Activated T-helper 1 cell treated with anti-CD3 and anti-CD28 coated beads, Interleukin-12 subunit alpha, Interleukin-12 subunit beta, Interleukin-2, Interleukin-4 antibody, amounts not matched to agents 30 ng/mL and 10 ng/mL and 1 ng/mL, durations not matched to agents 14 hours and 24 hours and 36 hours (primary cell): ENCODE measurements at regions of chr18 and their contacts with region 1.

Region 1: GRCh38 chr18:3593904-3594661 is 144.1 kb downstream of the TGIF1 start:
- DNase-seq: peak; percentile 83
- H3K4me3 Mint-ChIP-seq: peak overlapping the region; percentile 89
- H3K27ac Mint-ChIP-seq: peak overlapping the region; percentile 98
- H3K4me1 Mint-ChIP-seq: peaks cover 63% of the 10 kb centered on the region
- H3K27me3 Mint-ChIP-seq: no peaks in the 10 kb centered on the region

Region 2: DNA sequence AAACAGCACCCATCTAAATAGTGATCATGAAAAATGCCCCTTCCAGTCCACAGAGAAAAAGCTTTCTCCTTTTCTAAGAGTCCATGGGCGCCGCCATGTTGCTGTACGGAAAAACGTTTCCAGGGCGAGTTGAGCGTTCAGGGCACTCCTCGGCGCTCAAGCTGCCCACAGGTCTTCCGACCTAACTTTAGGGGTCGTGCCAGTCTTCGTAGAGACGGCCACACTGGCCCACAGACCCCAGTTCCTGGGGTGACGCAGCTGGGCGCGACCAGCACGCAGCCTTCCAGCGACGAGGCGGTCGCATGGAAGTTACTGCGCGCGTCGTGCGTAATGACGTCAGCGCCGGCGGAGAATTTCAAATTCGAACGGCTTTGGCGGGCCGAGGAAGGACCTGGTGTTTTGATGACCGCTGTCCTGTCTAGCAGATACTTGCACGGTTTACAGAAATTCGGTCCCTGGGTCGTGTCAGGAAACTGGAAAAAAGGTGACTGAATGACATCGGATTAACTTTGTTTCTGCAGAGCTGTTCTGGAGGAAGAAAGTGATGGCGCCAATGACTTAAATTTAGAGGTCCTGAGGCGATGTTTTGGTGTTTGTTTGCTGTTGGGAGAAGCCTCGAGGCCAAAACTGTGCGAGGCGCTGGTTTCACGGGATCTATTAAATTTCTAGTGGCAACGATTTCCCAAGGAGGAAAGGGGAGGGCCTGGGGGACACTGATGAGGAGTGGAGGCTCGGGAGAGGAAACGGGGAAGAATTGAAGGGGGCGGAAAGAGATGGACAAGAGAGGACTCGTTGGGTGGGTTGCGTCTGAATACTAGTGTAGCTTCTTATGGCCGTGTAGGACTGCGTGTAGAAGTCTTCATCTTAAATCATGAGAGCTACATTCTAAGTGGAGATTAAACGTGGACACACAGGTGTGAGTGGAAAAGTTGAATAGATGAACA is 1022.6 kb before region 1 on chr18 and contains the starts of genes METTL4 and NDC80:
- intact Hi-C with region 1: loop called (anchors 10 kb)
- DNase-seq: peak; percentile 79
- H3K4me3 Mint-ChIP-seq: peak within 1 kb of the TSS; percentile 97
- H3K27ac Mint-ChIP-seq: peak within 1 kb of the TSS; percentile 97
- H3K4me1 Mint-ChIP-seq: peaks cover 66% of the 10 kb centered on the region
- H3K27me3 Mint-ChIP-seq: no peaks in the 10 kb centered on the region
- total RNA-seq, gene METTL4: 15.0 and 26.2 TPM in 2 replicates
- total RNA-seq, gene NDC80: 41.2 and 42.6 TPM in 2 replicates

Region 3: GRCh38 chr18:3261371-3262246 is 332.5 kb before region 1 on chr18 and contains the start of gene MYL12B:
- intact Hi-C with region 1: loop called (anchors 1 kb)
- DNase-seq: peak; percentile 75
- H3K4me3 Mint-ChIP-seq: peak within 1 kb of the TSS; percentile 93
- H3K27ac Mint-ChIP-seq: peak within 1 kb of the TSS; percentile 98
- H3K4me1 Mint-ChIP-seq: peaks cover 82% of the 10 kb centered on the region
- H3K27me3 Mint-ChIP-seq: no peaks in the 10 kb centered on the region
- total RNA-seq, gene MYL12B: 234 and 235 TPM in 2 replicates

Region 4: GRCh38 chr18:3305354-3305762 is 288.7 kb before region 1 on chr18:
- intact Hi-C with region 1: loop called (anchors 1 kb)
- DNase-seq: peak; percentile 44
- H3K4me3 Mint-ChIP-seq: peak overlapping the region; percentile 3
- H3K27ac Mint-ChIP-seq: peak overlapping the region; percentile 94
- H3K4me1 Mint-ChIP-seq: peaks cover 23% of the 10 kb centered on the region
- H3K27me3 Mint-ChIP-seq: peaks cover 17% of the 10 kb centered on the region

Region 5: GRCh38 chr18:3604498-3605408 is 10.7 kb after region 1 on chr18:
- intact Hi-C with region 1: loop called (anchors 1 kb)
- DNase-seq: peak; percentile 38
- H3K4me3 Mint-ChIP-seq: no peak overlapping the region
- H3K27ac Mint-ChIP-seq: no peak overlapping the region
- H3K4me1 Mint-ChIP-seq: peaks cover 19% of the 10 kb centered on the region
- H3K27me3 Mint-ChIP-seq: no peaks in the 10 kb centered on the region

Region 6: GRCh38 chr18:3645384-3646156 is 51.5 kb after region 1 on chr18:
- intact Hi-C with region 1: loop called (anchors 1 kb)
- DNase-seq: no peak
- H3K4me3 Mint-ChIP-seq: no peak overlapping the region
- H3K27ac Mint-ChIP-seq: no peak overlapping the region
- H3K4me1 Mint-ChIP-seq: peaks cover 49% of the 10 kb centered on the region
- H3K27me3 Mint-ChIP-seq: no peaks in the 10 kb centered on the region

Region 7: DNA sequence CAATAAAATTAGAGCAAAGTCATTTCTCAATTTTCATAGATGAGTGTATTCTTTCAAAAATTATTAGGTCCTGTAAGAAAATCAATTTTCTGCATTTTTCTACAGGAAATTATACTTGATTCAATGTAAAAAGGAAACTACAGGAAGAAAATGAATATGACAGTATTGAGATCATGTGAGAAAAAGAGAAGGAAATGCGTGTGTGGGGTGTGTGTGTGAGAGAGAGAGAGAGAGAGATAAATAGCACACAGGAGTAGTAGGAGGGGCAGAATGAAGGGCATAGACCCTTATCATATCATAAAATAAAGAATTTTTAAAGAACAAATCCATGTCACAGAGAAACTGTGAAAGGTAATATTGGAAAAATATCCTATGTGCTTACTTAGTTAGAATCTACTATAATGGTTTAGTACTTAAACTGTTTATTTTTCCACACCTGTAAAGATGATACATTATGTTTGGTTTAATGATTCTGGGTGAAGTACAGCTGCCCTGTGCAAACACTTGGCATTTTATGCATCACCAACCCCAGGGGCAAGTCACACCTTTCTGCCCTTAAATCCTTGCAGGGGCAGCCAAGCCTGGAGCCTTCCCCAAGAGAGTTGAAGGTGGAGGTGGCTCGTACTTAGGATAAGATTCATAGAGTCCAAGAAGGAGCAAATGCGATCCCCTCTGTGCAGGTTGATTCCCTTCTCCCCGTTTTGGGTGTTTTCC is 132.3 kb after region 1 on chr18:
- intact Hi-C with region 1: no loop called
- DNase-seq: no peak
- H3K4me3 Mint-ChIP-seq: no peak overlapping the region
- H3K27ac Mint-ChIP-seq: no peak overlapping the region
- H3K4me1 Mint-ChIP-seq: no peaks in the 10 kb centered on the region
- H3K27me3 Mint-ChIP-seq: peaks cover 18% of the 10 kb centered on the region

Region 8: GRCh38 chr18:5237723-5238370 is 1643.8 kb after region 1 on chr18:
- intact Hi-C with region 1: loop called (anchors 5 kb)
- DNase-seq: peak; percentile 87
- H3K4me3 Mint-ChIP-seq: peak overlapping the region; percentile 97
- H3K27ac Mint-ChIP-seq: peak overlapping the region; percentile 98
- H3K4me1 Mint-ChIP-seq: peaks cover 47% of the 10 kb centered on the region
- H3K27me3 Mint-ChIP-seq: peaks cover 8% of the 10 kb centered on the region